CD8-positive, alpha-beta T cell (primary cell): ENCODE measurements at regions of chr17 and their contacts with region 1.

Region 1: GRCh38 chr17:7435221-7435675 is at the start of gene TMEM102:
- DNase-seq: peak; percentile 96 to 99 (median 98)
- ATAC-seq: peak; percentile 81
- H3K4me3 ChIP-seq: peak within 1 kb of the TSS; percentile 70 to 82
- H3K4me3 Mint-ChIP-seq: peak within 1 kb of the TSS; percentile 92
- H3K27ac ChIP-seq: peak within 1 kb of the TSS; percentile 66 to 90
- H3K27ac Mint-ChIP-seq: peak within 1 kb of the TSS; percentile 95
- H3K4me1 ChIP-seq: peaks cover 38% of the 10 kb centered on the region
- H3K4me1 Mint-ChIP-seq: peaks cover 38% of the 10 kb centered on the region
- H3K27me3 ChIP-seq: peaks cover 0 to 4% of the 10 kb centered on the region in 2 experiments
- H3K27me3 Mint-ChIP-seq: peaks cover 12% of the 10 kb centered on the region
- CTCF ChIP-seq: no peak
- total RNA-seq, gene TMEM102: 13.2 to 15.3 TPM

Region 2: GRCh38 chr17:7261172-7261927 is 173.9 kb before region 1 on chr17:
- CTCF ChIA-PET with region 1: no interaction called
- POLR2A ChIA-PET with region 1: no interaction called
- intact Hi-C with region 1: loop called in 1 of 2 experiments (anchors 5 kb)
- DNase-seq: peak in 6 of 9 experiments; percentile 40 to 71 (median 52)
- ATAC-seq: peak; percentile 57
- H3K4me3 ChIP-seq: peak overlapping the region; percentile 45 to 61
- H3K4me3 Mint-ChIP-seq: peak overlapping the region; percentile 80
- H3K27ac ChIP-seq: peak overlapping the region; percentile 31 to 59
- H3K27ac Mint-ChIP-seq: peak overlapping the region; percentile 90
- H3K4me1 ChIP-seq: peaks cover 34% of the 10 kb centered on the region
- H3K4me1 Mint-ChIP-seq: peaks cover 28% of the 10 kb centered on the region
- H3K27me3 ChIP-seq: peaks cover 0 to 11% of the 10 kb centered on the region in 2 experiments
- H3K27me3 Mint-ChIP-seq: no peaks in the 10 kb centered on the region
- CTCF ChIP-seq: no peak

Region 3: DNA sequence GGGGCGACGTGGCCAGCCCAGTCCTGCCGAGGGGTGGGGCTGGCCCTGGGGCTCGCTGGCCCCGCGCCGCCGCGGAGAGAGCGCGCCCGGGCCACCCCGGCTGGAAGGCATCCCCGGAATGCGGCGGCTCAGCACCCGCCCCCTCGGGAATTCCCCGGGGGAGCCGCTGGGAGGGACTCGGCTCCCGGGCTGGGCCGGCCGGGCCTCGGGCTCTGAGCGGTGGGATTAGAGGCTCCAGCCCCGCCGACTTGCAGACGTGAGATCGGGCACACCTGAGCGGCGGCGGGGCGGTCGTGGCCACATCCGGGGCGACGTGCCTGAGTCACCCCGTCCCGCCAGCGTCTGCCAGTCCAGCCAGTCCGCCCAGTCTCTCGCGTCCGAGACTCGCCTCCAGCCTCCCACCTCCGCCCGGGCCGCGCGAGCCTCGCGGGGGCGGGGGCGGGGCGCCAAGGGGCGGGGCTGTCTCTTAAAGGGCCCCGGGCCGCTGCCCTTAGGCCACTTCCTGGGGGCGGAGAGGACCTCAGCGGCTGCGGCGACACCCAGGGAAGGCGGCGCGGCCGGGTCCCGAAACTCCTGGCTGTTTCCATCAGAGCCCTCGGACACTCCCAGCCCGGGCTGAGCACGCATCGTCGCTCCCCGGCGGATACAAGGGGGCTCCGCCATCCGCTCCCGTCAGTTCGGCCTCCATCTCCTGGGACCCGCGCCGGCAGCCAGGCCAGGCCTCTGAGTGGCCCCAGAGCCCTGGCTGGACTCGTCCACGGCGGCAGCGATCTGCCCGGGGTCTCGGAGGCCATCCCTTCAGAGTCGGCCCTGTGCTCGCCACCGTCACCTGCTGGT is 83.4 kb before region 1 on chr17 and contains the start of gene KCTD11:
- CTCF ChIA-PET with region 1: interaction called, 120 read pairs
- POLR2A ChIA-PET with region 1: interaction called, 13 read pairs
- intact Hi-C with region 1: loop called (anchors 1 kb)
- DNase-seq: peak in 8 of 9 experiments; percentile 64 to 90 (median 80)
- ATAC-seq: peak; percentile 48
- H3K4me3 ChIP-seq: peak within 1 kb of the TSS; percentile 62 to 73
- H3K4me3 Mint-ChIP-seq: peak within 1 kb of the TSS; percentile 87
- H3K27ac ChIP-seq: peak within 1 kb of the TSS; percentile 53 to 87
- H3K27ac Mint-ChIP-seq: peak within 1 kb of the TSS; percentile 88
- H3K4me1 ChIP-seq: peaks cover 42% of the 10 kb centered on the region
- H3K4me1 Mint-ChIP-seq: peaks cover 38% of the 10 kb centered on the region
- H3K27me3 ChIP-seq: no peaks in the 10 kb centered on the region
- H3K27me3 Mint-ChIP-seq: no peaks in the 10 kb centered on the region
- CTCF ChIP-seq: peak; percentile 20
- total RNA-seq, gene KCTD11: 1.4 to 1.8 TPM

Region 4: DNA sequence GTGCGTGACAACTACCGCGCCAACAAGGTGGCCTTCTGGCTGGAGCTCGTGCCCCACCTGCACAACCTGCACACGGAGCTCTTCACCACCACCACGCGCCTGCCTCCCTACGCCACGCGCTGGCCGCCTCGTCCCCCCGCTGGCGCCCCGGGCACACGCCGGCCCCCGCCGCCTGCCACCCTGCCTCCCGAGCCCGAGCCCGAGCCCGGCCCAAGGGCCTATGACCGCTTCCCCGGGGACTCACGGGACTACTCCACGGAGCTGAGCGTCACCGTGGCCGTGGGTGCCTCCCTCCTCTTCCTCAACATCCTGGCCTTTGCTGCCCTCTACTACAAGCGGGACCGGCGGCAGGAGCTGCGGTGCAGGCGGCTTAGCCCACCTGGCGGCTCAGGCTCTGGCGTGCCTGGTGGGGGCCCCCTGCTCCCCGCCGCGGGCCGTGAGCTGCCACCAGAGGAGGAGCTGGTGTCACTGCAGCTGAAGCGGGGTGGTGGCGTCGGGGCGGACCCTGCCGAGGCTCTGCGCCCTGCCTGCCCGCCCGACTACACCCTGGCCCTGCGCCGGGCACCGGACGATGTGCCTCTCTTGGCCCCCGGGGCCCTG is 18.1 kb before region 1 on chr17:
- CTCF ChIA-PET with region 1: no interaction called
- POLR2A ChIA-PET with region 1: no interaction called
- intact Hi-C with region 1: no loop called
- DNase-seq: no peak
- ATAC-seq: no peak
- H3K4me3 ChIP-seq: no peak overlapping the region
- H3K4me3 Mint-ChIP-seq: no peak overlapping the region
- H3K27ac ChIP-seq: no peak overlapping the region
- H3K27ac Mint-ChIP-seq: no peak overlapping the region
- H3K4me1 ChIP-seq: no peaks in the 10 kb centered on the region
- H3K4me1 Mint-ChIP-seq: no peaks in the 10 kb centered on the region
- H3K27me3 ChIP-seq: no peaks in the 10 kb centered on the region
- H3K27me3 Mint-ChIP-seq: no peaks in the 10 kb centered on the region
- CTCF ChIP-seq: no peak

Region 5: DNA sequence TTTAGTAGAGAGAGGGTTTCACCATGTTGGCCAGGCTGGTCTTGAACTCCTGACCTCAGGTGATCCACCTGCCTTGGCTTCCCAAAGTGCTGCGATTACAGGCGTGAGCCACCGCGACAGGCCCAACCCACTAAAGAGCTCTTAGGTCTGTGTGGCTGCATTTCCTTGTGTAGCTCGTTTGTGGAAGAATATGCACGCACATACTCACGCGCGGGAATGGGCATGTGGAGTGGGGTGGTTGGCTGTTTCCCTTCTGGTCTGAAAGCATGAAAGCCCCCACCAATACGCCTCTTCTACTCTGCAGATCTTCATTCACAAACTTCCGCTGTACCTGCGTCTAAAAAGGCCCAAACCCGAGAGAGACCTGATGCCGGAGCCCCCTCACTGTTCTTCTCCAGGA is 19.7 kb after region 1 on chr17:
- CTCF ChIA-PET with region 1: interaction called, 60 read pairs
- POLR2A ChIA-PET with region 1: interaction called, 32 read pairs
- intact Hi-C with region 1: loop called (anchors 1 kb)
- DNase-seq: no peak
- ATAC-seq: peak; percentile 35
- H3K4me3 ChIP-seq: peak overlapping the region; percentile 82 to 83
- H3K4me3 Mint-ChIP-seq: peak overlapping the region; percentile 98
- H3K27ac ChIP-seq: peak overlapping the region; percentile 60 to 74
- H3K27ac Mint-ChIP-seq: peak overlapping the region; percentile 91
- H3K4me1 ChIP-seq: peaks cover 15% of the 10 kb centered on the region
- H3K4me1 Mint-ChIP-seq: peaks cover 24% of the 10 kb centered on the region
- H3K27me3 ChIP-seq: no peaks in the 10 kb centered on the region
- H3K27me3 Mint-ChIP-seq: no peaks in the 10 kb centered on the region
- CTCF ChIP-seq: no peak

Region 6: DNA sequence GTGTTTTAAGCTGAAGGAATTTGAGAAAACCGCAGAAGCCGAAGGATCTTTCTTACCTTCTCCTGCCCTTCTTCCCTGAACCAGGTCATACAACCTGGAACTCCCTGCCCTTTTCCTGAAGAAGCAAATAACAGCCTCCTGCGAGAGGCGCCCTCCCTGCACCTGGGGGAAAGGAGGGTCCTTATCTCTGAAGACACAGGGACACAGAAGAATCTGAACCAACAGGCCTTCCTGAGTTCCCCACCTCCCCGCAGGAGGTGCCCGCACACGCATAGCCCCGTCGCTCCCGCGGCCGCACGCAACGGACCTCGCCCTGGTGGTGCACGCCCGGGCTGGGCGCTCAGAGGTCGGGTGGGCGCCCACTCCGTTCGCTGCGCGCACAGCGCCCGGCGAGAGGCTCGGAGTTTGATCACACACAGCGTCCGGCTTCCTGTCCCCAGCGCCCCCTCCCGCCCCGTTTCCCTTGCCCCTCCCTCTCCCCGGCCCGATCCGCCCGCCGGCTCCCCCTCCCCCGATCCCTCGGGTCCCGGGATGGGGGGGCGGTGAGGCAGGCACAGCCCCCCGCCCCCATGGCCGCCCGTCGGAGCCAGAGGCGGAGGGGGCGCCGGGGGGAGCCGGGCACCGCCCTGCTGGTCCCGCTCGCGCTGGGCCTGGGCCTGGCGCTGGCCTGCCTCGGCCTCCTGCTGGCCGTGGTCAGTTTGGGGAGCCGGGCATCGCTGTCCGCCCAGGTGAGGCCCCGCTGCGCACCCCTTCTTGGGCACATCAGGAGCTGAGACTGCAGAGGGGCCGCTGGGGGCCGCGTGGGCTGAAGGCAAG is 113.5 kb after region 1 on chr17 and contains the start of gene TNFSF12:
- CTCF ChIA-PET with region 1: interaction called, 4 read pairs
- POLR2A ChIA-PET with region 1: no interaction called
- intact Hi-C with region 1: loop called in 1 of 2 experiments (anchors 5 kb)
- DNase-seq: peak in 8 of 9 experiments; percentile 45 to 80 (median 64)
- ATAC-seq: peak; percentile 49
- H3K4me3 ChIP-seq: peak within 1 kb of the TSS; percentile 64 to 92
- H3K4me3 Mint-ChIP-seq: peak within 1 kb of the TSS; percentile 84
- H3K27ac ChIP-seq: peak within 1 kb of the TSS; percentile 78 to 83
- H3K27ac Mint-ChIP-seq: peak within 1 kb of the TSS; percentile 90
- H3K4me1 ChIP-seq: peaks cover 56% of the 10 kb centered on the region
- H3K4me1 Mint-ChIP-seq: peaks cover 45% of the 10 kb centered on the region
- H3K27me3 ChIP-seq: no peaks in the 10 kb centered on the region
- H3K27me3 Mint-ChIP-seq: no peaks in the 10 kb centered on the region
- CTCF ChIP-seq: no peak
- total RNA-seq, gene TNFSF12: 11.3 to 13.1 TPM

Region 7: GRCh38 chr17:7589204-7589868 is 154.1 kb after region 1 on chr17:
- CTCF ChIA-PET with region 1: interaction called, 12 read pairs
- POLR2A ChIA-PET with region 1: interaction called, 6 read pairs
- intact Hi-C with region 1: no loop called
- DNase-seq: peak; percentile 40 to 81 (median 68)
- ATAC-seq: peak; percentile 89
- H3K4me3 ChIP-seq: no peak overlapping the region
- H3K4me3 Mint-ChIP-seq: no peak overlapping the region
- H3K27ac ChIP-seq: no peak overlapping the region
- H3K27ac Mint-ChIP-seq: peak overlapping the region; percentile 41
- H3K4me1 ChIP-seq: peaks cover 14% of the 10 kb centered on the region
- H3K4me1 Mint-ChIP-seq: peaks cover 12% of the 10 kb centered on the region
- H3K27me3 ChIP-seq: no peaks in the 10 kb centered on the region
- H3K27me3 Mint-ChIP-seq: no peaks in the 10 kb centered on the region
- CTCF ChIP-seq: peak; percentile 61

Region 8: GRCh38 chr17:7711051-7711755 is 276.0 kb after region 1 on chr17:
- CTCF ChIA-PET with region 1: no interaction called
- POLR2A ChIA-PET with region 1: no interaction called
- intact Hi-C with region 1: no loop called
- DNase-seq: no peak
- ATAC-seq: peak; percentile 44
- H3K4me3 ChIP-seq: no peak overlapping the region
- H3K4me3 Mint-ChIP-seq: no peak overlapping the region
- H3K27ac ChIP-seq: no peak overlapping the region
- H3K27ac Mint-ChIP-seq: no peak overlapping the region
- H3K4me1 ChIP-seq: peaks cover 9% of the 10 kb centered on the region
- H3K4me1 Mint-ChIP-seq: peaks cover 13% of the 10 kb centered on the region
- H3K27me3 ChIP-seq: peaks cover 2 to 20% of the 10 kb centered on the region in 2 experiments
- H3K27me3 Mint-ChIP-seq: peaks cover 57% of the 10 kb centered on the region
- CTCF ChIP-seq: no peak